Activated T-helper 2 cell treated with anti-CD3 and anti-CD28 coated beads, Interferon-gamma antibody, Interleukin-2, Interleukin-4, amounts not matched to agents 10 μg/mL and 5 μg/mL and 100 μg/mL, durations not matched to agents 14 hours and 24 hours and 36 hours (primary cell): ENCODE measurements at regions of chr3 and their contacts with region 1.

Region 1: DNA sequence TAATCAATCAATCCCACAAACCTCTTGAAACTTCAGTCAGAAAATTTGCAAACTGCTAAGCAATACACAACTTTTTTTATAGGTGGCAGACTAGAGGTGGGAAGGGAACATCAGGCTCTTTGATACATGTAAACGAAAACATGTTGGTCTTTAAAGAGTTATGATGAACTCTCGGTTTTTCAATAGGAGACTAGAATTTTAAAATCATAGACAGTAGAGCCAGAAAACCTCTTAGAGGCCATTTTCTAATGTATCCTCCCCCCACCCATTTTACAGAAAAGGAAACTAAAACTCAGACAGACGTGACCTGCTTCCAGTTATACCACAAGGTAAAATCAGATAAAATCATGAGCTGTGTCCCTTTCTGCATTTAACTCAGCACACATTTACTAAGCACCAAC is 179.1 kb upstream of the LPP start:
- DNase-seq: peak; percentile 20
- H3K4me3 Mint-ChIP-seq: peak overlapping the region; percentile 72
- H3K27ac Mint-ChIP-seq: peak overlapping the region; percentile 93
- H3K4me1 Mint-ChIP-seq: peaks cover 68% of the 10 kb centered on the region
- H3K27me3 Mint-ChIP-seq: no peaks in the 10 kb centered on the region

Region 2: GRCh38 chr3:187745201-187746058 is 229.4 kb before region 1 on chr3 and contains the start of gene BCL6:
- intact Hi-C with region 1: loop called (anchors 1 kb)
- DNase-seq: peak; percentile 90
- H3K4me3 Mint-ChIP-seq: peak within 1 kb of the TSS; percentile 94
- H3K27ac Mint-ChIP-seq: peak within 1 kb of the TSS; percentile 99
- H3K4me1 Mint-ChIP-seq: peaks cover 55% of the 10 kb centered on the region
- H3K27me3 Mint-ChIP-seq: no peaks in the 10 kb centered on the region
- total RNA-seq, gene BCL6: 12.0 and 16.5 TPM in 2 replicates

Region 3: DNA sequence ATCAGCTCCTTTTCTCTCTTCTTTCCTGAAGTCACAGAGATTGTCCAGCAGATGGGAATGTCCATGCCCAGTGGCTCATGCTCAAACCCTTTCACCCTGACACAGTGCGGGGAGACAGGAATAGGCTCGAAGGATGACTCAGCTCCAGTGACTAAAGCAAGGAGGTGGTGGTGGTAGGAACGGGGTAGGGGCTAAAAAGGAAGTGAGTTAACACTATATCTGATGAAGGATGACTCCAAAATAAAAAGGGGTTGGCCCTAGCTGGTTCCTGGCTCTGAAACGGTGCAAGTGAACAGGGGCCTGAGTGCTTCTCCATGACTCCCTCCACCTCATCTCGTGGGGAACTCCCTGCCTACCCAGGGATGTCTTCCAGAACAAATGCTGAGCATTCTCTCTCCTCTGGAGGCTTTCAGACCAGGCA is 11.7 kb after region 1 on chr3:
- intact Hi-C with region 1: loop called (anchors 1 kb)
- DNase-seq: peak; percentile 35
- H3K4me3 Mint-ChIP-seq: peak overlapping the region; percentile 22
- H3K27ac Mint-ChIP-seq: peak overlapping the region; percentile 65
- H3K4me1 Mint-ChIP-seq: peaks cover 51% of the 10 kb centered on the region
- H3K27me3 Mint-ChIP-seq: no peaks in the 10 kb centered on the region

Region 4: DNA sequence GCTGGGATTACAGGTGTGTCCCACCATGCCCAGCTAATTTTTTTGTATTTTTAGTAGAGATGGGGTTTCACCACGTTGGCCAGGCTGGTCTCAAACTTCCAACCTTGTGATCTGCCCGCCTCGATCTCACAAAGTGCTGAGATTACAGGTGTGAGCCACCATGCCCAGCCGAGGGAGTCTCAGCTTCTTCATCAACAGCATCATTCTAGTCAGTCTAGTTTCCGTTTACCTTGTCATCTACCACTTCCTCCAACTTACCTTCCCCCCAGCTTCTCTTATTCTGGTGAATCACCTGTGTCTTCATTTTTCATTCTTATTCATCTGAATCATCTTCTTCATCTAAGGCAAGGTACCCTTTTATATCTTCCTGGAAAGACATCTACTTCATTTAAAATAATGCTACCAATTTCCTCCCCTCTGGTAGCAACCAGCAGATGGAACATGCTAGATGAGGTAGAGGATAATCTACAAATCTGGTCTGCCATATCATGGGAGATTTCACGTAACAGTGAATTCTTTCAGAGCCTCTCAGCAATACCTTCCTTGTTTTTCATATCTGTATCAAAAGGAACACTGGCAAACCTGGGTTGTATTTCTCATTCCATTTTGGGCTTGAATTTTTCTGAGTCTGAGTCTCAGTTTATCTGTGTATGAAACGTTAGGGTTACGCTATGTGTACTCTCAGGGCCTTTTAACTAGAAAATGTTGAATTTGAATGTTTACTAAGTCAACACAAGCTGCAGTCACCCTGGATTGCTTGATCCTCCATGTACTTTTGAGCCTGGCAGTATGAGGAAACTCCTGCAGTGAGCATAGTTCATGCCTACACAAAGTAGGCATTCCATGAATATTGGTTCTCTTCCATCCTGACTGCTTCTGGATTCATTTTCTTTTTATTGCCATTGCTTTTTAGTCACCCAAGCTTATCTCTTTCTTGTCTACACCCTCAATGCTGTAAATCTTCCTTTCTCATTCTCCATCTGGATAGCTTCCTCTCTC is 195.9 kb after region 1 on chr3:
- intact Hi-C with region 1: loop called (anchors 1 kb)
- DNase-seq: no peak
- H3K4me3 Mint-ChIP-seq: no peak overlapping the region
- H3K27ac Mint-ChIP-seq: peak overlapping the region; percentile 56
- H3K4me1 Mint-ChIP-seq: peaks cover 38% of the 10 kb centered on the region
- H3K27me3 Mint-ChIP-seq: no peaks in the 10 kb centered on the region

Region 5: GRCh38 chr3:188309437-188310269 is 334.8 kb after region 1 on chr3:
- intact Hi-C with region 1: loop called (anchors 5 kb)
- DNase-seq: peak; percentile 38
- H3K4me3 Mint-ChIP-seq: peak overlapping the region; percentile 48
- H3K27ac Mint-ChIP-seq: peak overlapping the region; percentile 79
- H3K4me1 Mint-ChIP-seq: peaks cover 25% of the 10 kb centered on the region
- H3K27me3 Mint-ChIP-seq: peaks cover under 1% of the 10 kb centered on the region

Region 6: DNA sequence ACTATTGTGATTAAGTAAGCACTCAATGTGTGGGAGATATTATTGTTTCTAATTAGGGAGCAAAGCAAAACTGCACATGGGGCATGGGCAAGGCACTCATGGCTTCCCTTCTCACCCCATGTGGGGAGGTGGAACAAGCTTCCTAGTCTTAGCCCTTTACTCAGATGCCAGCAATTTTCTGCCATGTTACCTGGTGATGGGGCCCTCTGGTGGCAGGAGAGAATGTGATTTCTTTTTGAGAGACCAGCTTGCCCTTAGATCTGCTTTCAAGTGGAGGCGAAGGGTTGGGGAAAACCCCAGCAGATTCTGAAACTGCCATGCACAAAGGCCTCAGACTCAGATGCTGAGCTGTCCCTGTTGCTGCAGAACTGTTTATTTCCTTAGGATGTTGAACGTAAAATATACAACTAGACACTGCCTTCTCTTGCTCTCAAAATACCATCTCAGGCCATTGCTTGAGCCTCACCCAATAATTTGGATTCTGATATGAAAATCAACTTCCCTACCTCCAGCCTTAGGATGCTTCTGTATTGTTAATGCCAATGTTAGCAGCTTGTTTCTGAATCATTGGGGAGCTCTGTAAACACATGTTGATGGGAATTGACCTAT is 1066.7 kb after region 1 on chr3:
- intact Hi-C with region 1: loop called (anchors 10 kb)
- DNase-seq: peak; percentile 76
- H3K4me3 Mint-ChIP-seq: no peak overlapping the region
- H3K27ac Mint-ChIP-seq: peak overlapping the region; percentile 25
- H3K4me1 Mint-ChIP-seq: peaks cover 51% of the 10 kb centered on the region
- H3K27me3 Mint-ChIP-seq: no peaks in the 10 kb centered on the region